Activated B cell treated with CpG ODN at 0.5 μM for 24 hours (primary cell): ENCODE measurements at regions of chr14 and their contacts with region 1.

Region 1: GRCh38 chr14:51202914-51203665 is 37.0 kb upstream of the TMX1 start:
- DNase-seq: peak; percentile 69
- ATAC-seq: peak; percentile 85
- H3K4me3 Mint-ChIP-seq: peak overlapping the region; percentile 54
- H3K27ac Mint-ChIP-seq: peak overlapping the region; percentile 42
- H3K4me1 Mint-ChIP-seq: peaks cover 38% of the 10 kb centered on the region
- H3K27me3 Mint-ChIP-seq: peaks cover 2% of the 10 kb centered on the region
- CTCF ChIP-seq: no peak

Region 2: GRCh38 chr14:50798048-50798421 is 405.1 kb before region 1 on chr14:
- CTCF ChIA-PET with region 1: no interaction called
- POLR2A ChIA-PET with region 1: no interaction called
- intact Hi-C with region 1: loop called (anchors 10 kb)
- DNase-seq: no peak
- ATAC-seq: peak; percentile 86
- H3K4me3 Mint-ChIP-seq: peak overlapping the region; percentile 58
- H3K27ac Mint-ChIP-seq: peak overlapping the region; percentile 51
- H3K4me1 Mint-ChIP-seq: peaks cover 74% of the 10 kb centered on the region
- H3K27me3 Mint-ChIP-seq: no peaks in the 10 kb centered on the region
- CTCF ChIP-seq: no peak

Region 3: GRCh38 chr14:50943943-50944646 is 259.0 kb before region 1 on chr14 and contains the start of gene PYGL:
- CTCF ChIA-PET with region 1: no interaction called
- POLR2A ChIA-PET with region 1: no interaction called
- intact Hi-C with region 1: loop called (anchors 5 kb)
- DNase-seq: peak; percentile 39
- ATAC-seq: peak; percentile 87
- H3K4me3 Mint-ChIP-seq: peak within 1 kb of the TSS; percentile 86
- H3K27ac Mint-ChIP-seq: no peak within 1 kb of the TSS
- H3K4me1 Mint-ChIP-seq: peaks cover 15% of the 10 kb centered on the region
- H3K27me3 Mint-ChIP-seq: peaks cover 37% of the 10 kb centered on the region
- CTCF ChIP-seq: no peak
- total RNA-seq, gene PYGL: 0.32 TPM in 1 of 2 replicates, not detected in the other

Region 4: GRCh38 chr14:51157012-51157411 is 46.1 kb before region 1 on chr14:
- CTCF ChIA-PET with region 1: interaction called, 25 read pairs
- POLR2A ChIA-PET with region 1: interaction called, 3 read pairs
- intact Hi-C with region 1: loop called (anchors 1 kb)
- DNase-seq: no peak
- ATAC-seq: peak; percentile 54
- H3K4me3 Mint-ChIP-seq: no peak overlapping the region
- H3K27ac Mint-ChIP-seq: no peak overlapping the region
- H3K4me1 Mint-ChIP-seq: peaks cover 16% of the 10 kb centered on the region
- H3K27me3 Mint-ChIP-seq: no peaks in the 10 kb centered on the region
- CTCF ChIP-seq: no peak

Region 5: GRCh38 chr14:51185754-51186153 is 17.3 kb before region 1 on chr14:
- CTCF ChIA-PET with region 1: no interaction called
- POLR2A ChIA-PET with region 1: interaction called, 9 read pairs
- intact Hi-C with region 1: loop called (anchors 1 kb)
- DNase-seq: no peak
- ATAC-seq: peak; percentile 56
- H3K4me3 Mint-ChIP-seq: no peak overlapping the region
- H3K27ac Mint-ChIP-seq: no peak overlapping the region
- H3K4me1 Mint-ChIP-seq: peaks cover 28% of the 10 kb centered on the region
- H3K27me3 Mint-ChIP-seq: no peaks in the 10 kb centered on the region
- CTCF ChIP-seq: no peak

Region 6: GRCh38 chr14:51239813-51240803 is 37.0 kb after region 1 on chr14 and contains the start of gene TMX1:
- CTCF ChIA-PET with region 1: no interaction called
- POLR2A ChIA-PET with region 1: interaction called, 13 read pairs
- intact Hi-C with region 1: loop called (anchors 1 kb)
- DNase-seq: peak; percentile 83
- ATAC-seq: peak; percentile 92
- H3K4me3 Mint-ChIP-seq: no peak within 1 kb of the TSS
- H3K27ac Mint-ChIP-seq: no peak within 1 kb of the TSS
- H3K4me1 Mint-ChIP-seq: peaks cover 12% of the 10 kb centered on the region
- H3K27me3 Mint-ChIP-seq: no peaks in the 10 kb centered on the region
- CTCF ChIP-seq: no peak
- total RNA-seq, gene TMX1: 24.6 and 25.3 TPM in 2 replicates